K562 (cell line): ENCODE measurements at regions of chrX and their contacts with region 1.

Region 1: DNA sequence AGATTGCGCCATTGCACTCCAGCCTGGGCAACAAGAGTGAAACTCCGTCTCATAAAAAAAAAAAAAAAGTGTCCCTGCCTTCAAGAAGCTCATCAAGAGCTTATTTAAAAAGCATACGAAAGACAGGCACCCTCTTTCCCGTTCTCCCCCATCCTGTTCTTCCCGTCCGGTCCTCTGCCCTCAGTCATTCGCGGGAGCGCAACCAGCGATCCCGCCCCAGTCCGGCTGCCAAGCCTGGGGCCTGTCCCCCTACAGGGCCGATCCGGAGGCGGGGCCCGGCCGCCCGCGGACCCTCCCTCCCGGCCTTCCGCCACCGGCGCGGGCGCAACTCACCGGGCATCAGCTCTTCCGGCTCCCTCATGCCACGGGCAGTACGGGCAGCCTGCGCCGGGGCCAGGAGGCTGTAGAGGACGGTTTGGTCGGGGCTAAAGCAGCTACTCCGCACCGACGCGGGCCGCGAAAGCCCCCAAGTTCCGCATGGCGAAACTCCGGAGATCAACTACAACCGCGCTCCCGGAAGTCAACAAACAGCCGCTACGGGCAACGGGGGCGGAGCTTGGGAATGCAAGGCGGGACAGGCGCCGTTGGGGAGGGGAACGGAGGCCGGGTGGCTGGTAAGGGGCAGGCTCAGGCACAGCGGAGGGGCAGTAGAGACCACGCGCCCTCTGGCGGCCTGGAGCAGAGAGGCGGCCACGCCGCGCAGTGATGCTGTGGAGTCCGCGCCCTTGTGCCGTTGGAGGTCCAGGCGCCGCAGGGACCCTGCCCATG is at the start of gene RPGR:
- DNase-seq: peak; percentile 89 to 94 (median 91)
- ATAC-seq: peak; percentile 99
- H3K4me3 ChIP-seq: peak within 1 kb of the TSS; percentile 93
- H3K27ac ChIP-seq: peak within 1 kb of the TSS; percentile 74
- H3K4me1 ChIP-seq: peaks cover 6 to 8% of the 10 kb centered on the region in 2 experiments; a peak in 4 of 5 replicates
- H3K27me3 ChIP-seq: no peaks in the 10 kb centered on the region; a peak in 1 of 5 replicates
- CTCF ChIP-seq: peak; percentile 79 to 90 (median 83)
- EP300 ChIP-seq: no peak; the same call in 1 of the 2 replicates
- POLR2A ChIP-seq: peak; percentile 70
- RAD21 ChIP-seq: peak; percentile 54 to 77
- polyA plus RNA-seq, gene RPGR: 2.1 to 2.7 TPM

Region 2: DNA sequence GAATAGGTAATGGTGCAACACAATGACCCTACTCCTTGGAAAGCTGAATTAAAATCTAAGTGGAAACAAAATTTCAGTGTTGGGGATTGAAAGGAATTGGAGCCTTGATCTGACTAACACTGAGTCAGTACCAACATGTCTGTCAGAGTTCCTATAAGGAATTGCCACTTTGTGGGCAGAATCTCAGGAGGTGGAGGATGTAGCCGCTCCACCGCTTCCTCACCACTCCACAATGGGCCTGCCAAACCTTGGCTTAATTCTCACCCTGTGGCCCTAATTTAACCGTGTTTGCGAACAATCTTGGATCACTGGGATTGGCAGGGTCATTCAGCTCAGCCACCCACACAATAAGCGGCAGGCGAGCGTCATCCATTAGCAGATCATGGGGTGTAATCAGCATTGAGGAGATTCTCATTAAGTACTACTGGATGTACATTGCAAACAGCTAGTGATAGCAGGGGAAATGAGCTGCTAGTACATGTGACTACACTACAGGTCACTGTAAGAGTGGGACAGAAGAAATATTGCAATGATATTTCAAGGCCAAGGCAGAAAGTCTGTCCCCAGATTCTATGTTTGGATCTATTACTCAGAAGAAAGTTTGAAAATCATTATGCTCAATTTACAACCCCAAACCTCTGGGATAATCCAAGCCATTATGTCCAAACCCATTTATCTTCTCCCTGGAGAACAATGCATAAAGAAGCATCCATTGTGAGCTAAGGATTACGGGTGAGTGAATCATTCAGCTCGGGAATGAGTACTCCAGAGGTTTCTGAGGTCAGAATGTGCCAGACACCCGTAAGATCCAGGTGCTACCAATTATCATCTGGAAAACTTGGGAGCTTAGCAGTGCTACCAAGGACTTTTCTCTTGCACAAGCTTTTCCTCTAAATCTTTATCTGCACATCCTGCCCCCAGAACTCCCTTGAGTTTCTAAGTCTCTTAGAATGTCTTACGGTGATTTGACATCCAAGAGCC is 112.3 kb before region 1 on chrX:
- CTCF ChIA-PET with region 1: no interaction called
- POLR2A ChIA-PET with region 1: no interaction called
- in situ Hi-C with region 1: no loop called
- intact Hi-C with region 1: loop called (anchors 10 kb)
- DNase-seq: no peak
- ATAC-seq: no peak
- H3K4me3 ChIP-seq: no peak overlapping the region
- H3K27ac ChIP-seq: no peak overlapping the region
- H3K4me1 ChIP-seq: no peaks in the 10 kb centered on the region; a peak in 1 of 5 replicates
- H3K27me3 ChIP-seq: peaks cover 0 to 12% of the 10 kb centered on the region in 2 experiments; a peak in 3 of 5 replicates
- CTCF ChIP-seq: no peak
- EP300 ChIP-seq: no peak
- POLR2A ChIP-seq: no peak
- RAD21 ChIP-seq: no peak

Region 3: GRCh38 chrX:38260231-38260630 is 67.0 kb before region 1 on chrX:
- CTCF ChIA-PET with region 1: interaction called, 3 read pairs
- POLR2A ChIA-PET with region 1: no interaction called
- in situ Hi-C with region 1: no loop called
- intact Hi-C with region 1: loop called (anchors 1 kb)
- DNase-seq: peak; percentile 5 to 38 (median 18)
- ATAC-seq: peak; percentile 88
- H3K4me3 ChIP-seq: no peak overlapping the region
- H3K27ac ChIP-seq: no peak overlapping the region
- H3K4me1 ChIP-seq: peaks cover 0 to 4% of the 10 kb centered on the region in 2 experiments; a peak in 1 of 5 replicates
- H3K27me3 ChIP-seq: peaks cover 0 to 6% of the 10 kb centered on the region in 2 experiments; a peak in 1 of 5 replicates
- CTCF ChIP-seq: peak; percentile 48 to 58 (median 51)
- EP300 ChIP-seq: no peak
- POLR2A ChIP-seq: no peak
- RAD21 ChIP-seq: peak in 1 of 2 experiments; percentile 52; a peak in 2 of 4 replicates